ENCODE measurements at regions of chr6 and their contacts with region 1.

Region 1: GRCh38 chr6:111973118-111973761 is 80.7 kb upstream of the CCN6 start:
- DNase-seq: no peak
- ATAC-seq: peak; percentile 84
- H3K4me3 ChIP-seq: peak overlapping the region; percentile 10 to 33
- H3K27ac ChIP-seq: no peak overlapping the region
- H3K4me1 ChIP-seq: peaks cover 4 to 22% of the 10 kb centered on the region in 2 experiments; a peak in 3 of 4 replicates
- H3K27me3 ChIP-seq: no peaks in the 10 kb centered on the region
- CTCF ChIP-seq: no peak
- POLR2A ChIP-seq: no peak
- RAD21 ChIP-seq: no peak

Region 2: DNA sequence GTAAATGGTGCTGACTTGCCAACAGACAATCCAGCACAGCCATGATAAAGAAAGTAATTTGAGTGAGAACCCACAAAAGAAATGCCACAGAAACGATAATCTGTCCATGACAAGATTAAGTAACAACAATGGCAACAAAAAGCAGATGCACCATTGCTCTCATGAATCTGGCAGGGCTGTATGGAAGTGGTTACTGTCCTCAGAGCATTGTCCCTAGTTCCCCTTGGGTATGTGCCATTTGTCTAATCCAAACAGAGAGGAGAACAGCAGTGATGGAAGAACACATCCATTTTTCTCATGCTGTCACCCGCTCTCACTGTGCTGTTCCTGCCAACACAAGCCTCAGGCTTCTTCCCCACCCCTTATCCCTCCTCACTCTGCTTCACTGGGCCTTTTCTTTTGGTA is 556.1 kb before region 1 on chr6:
- CTCF ChIA-PET with region 1: no interaction called
- POLR2A ChIA-PET with region 1: no interaction called
- RAD21 ChIA-PET with region 1: no interaction called
- intact Hi-C with region 1: no loop called
- DNase-seq: no peak
- ATAC-seq: no peak
- H3K4me3 ChIP-seq: no peak overlapping the region
- H3K27ac ChIP-seq: no peak overlapping the region
- H3K4me1 ChIP-seq: no peaks in the 10 kb centered on the region
- H3K27me3 ChIP-seq: no peaks in the 10 kb centered on the region
- CTCF ChIP-seq: no peak
- POLR2A ChIP-seq: no peak
- RAD21 ChIP-seq: no peak

Region 3: DNA sequence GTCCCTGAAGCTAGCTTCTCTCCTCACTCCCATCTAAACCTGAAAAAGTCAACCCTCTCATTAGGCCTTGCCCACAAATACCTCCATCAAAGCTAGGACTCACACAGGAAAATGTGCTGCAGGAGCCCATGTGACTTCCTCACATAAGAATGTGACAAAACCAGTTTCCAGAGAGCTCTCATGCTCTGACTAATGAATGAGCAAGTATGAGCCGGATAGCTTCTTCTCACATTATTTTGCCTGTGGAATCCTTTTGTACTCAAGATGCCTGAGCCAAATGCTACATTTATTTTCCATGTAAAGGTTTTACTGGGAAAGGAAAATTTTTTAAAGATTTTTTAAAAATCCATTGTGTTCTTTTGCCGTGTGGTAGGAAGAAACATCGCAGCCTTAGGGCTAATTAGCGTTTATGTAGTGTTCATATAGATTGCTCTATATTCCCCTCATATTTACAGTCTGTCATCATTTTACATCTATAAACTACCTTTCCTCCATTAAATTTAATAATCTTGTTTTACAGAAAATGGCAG is 12.0 kb after region 1 on chr6:
- CTCF ChIA-PET with region 1: no interaction called
- POLR2A ChIA-PET with region 1: interaction called, 17 read pairs
- RAD21 ChIA-PET with region 1: no interaction called
- intact Hi-C with region 1: no loop called
- DNase-seq: peak; percentile 95
- ATAC-seq: peak; percentile 91
- H3K4me3 ChIP-seq: peak overlapping the region in 1 of 2 experiments; percentile 25; a peak in 2 of 4 replicates
- H3K27ac ChIP-seq: peak overlapping the region; percentile 87
- H3K4me1 ChIP-seq: peaks cover 36 to 54% of the 10 kb centered on the region in 2 experiments
- H3K27me3 ChIP-seq: no peaks in the 10 kb centered on the region
- CTCF ChIP-seq: no peak
- POLR2A ChIP-seq: no peak
- RAD21 ChIP-seq: peak; percentile 37; the same call in 1 of the 2 replicates